AG04449 (cell line): ENCODE measurements at regions of chr13 and their contacts with region 1.

Region 1: GRCh38 chr13:106630650-106631049 is 62.7 kb upstream of the ARGLU1 start:
- DNase-seq: no peak
- H3K4me3 ChIP-seq: no peak overlapping the region
- CTCF ChIP-seq: no peak

Region 2: GRCh38 chr13:106619688-106620555 is 10.7 kb before region 1 on chr13:
- CTCF ChIA-PET with region 1: interaction called, 10 read pairs
- POLR2A ChIA-PET with region 1: no interaction called
- DNase-seq: peak; percentile 16
- H3K4me3 ChIP-seq: no peak overlapping the region
- CTCF ChIP-seq: peak; percentile 84